Activated B cell treated with CpG ODN at 0.5 μM for 24 hours (primary cell): ENCODE measurements at regions of chr5 and their contacts with region 1.

Region 1: DNA sequence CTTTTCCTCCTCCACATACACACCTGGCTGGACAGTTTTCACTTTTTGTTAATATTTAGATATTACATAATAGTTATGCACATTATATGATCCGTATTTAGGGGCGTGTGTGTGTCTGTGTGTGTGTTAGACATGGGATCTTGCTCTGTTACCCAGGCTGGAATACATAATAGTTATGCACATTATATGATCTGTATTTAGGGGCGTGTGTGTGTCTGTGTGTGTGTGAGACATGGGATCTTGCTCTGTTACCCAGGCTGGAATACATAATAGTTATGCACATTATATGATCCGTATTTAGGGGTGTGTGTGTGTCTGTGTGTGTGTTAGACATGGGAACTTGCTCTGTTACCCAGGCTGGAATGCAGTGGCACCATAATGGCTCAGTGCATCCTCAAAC is 199.0 kb upstream of the OTULINL start:
- DNase-seq: no peak
- ATAC-seq: no peak
- H3K4me3 Mint-ChIP-seq: no peak overlapping the region
- H3K27ac Mint-ChIP-seq: no peak overlapping the region
- H3K4me1 Mint-ChIP-seq: peaks cover 11% of the 10 kb centered on the region
- H3K27me3 Mint-ChIP-seq: no peaks in the 10 kb centered on the region
- CTCF ChIP-seq: no peak

Region 2: DNA sequence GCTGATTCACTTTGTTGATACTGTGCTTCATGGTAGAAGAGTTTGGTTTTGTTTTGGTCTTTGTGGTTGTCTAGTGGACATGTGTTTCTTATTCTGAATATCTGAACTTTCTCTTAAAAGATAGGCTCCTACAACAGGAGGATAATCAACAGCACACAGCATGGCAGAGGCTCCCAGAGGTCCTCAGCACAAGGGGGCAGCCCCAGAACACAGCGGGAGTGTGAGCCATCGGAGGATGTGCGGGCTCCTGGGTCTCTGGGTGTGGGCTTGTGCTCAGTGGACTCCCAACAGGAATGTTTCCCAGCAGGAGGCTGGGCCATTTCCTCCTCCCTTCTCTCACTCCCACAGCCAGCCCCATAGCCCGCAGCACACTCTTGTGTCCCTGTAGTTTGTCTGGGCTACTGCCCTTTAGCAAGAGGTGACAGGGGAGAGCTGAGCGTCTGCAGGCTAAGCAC is 34.7 kb after region 1 on chr5:
- CTCF ChIA-PET with region 1: no interaction called
- POLR2A ChIA-PET with region 1: interaction called, 10 read pairs
- intact Hi-C with region 1: no loop called
- DNase-seq: no peak
- ATAC-seq: no peak
- H3K4me3 Mint-ChIP-seq: no peak overlapping the region
- H3K27ac Mint-ChIP-seq: no peak overlapping the region
- H3K4me1 Mint-ChIP-seq: peaks cover 16% of the 10 kb centered on the region
- H3K27me3 Mint-ChIP-seq: no peaks in the 10 kb centered on the region
- CTCF ChIP-seq: no peak